CD8-positive, alpha-beta T cell (primary cell): ENCODE measurements at regions of chr12 and their contacts with region 1.

Region 1: GRCh38 chr12:12442548-12443071 is 85.7 kb downstream of the BORCS5 start:
- DNase-seq: peak in 2 of 9 experiments; percentile 33 to 62
- ATAC-seq: peak; percentile 0
- H3K4me3 ChIP-seq: no peak overlapping the region
- H3K4me3 Mint-ChIP-seq: peak overlapping the region; percentile 51
- H3K27ac ChIP-seq: peak overlapping the region; percentile 66 to 89
- H3K27ac Mint-ChIP-seq: peak overlapping the region; percentile 92
- H3K4me1 ChIP-seq: peaks cover 44% of the 10 kb centered on the region
- H3K4me1 Mint-ChIP-seq: peaks cover 72% of the 10 kb centered on the region
- H3K27me3 ChIP-seq: no peaks in the 10 kb centered on the region
- H3K27me3 Mint-ChIP-seq: no peaks in the 10 kb centered on the region
- CTCF ChIP-seq: no peak

Region 2: DNA sequence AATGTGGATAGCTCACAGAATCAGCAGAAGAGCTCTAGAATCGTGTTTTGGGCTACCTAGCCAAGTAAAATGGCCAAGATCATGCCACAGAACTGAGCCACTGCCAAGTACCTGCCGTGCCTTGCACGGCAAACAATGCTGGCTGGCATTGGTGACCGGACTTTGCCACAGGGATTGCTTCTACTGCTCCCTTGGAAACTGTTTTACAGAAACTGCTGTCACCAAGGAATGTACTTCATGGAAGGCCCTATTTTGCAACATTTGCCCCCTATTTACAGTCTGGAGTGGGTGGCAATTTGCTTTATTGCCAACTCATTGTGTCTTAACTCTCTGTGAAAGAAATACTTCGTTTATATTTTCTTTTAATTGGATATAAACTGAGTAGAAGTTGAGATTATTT is 36.7 kb before region 1 on chr12:
- CTCF ChIA-PET with region 1: interaction called, 3 read pairs
- POLR2A ChIA-PET with region 1: interaction called, 3 read pairs
- intact Hi-C with region 1: loop called in 1 of 2 experiments (anchors 5 kb)
- DNase-seq: no peak
- ATAC-seq: no peak
- H3K4me3 ChIP-seq: no peak overlapping the region
- H3K4me3 Mint-ChIP-seq: no peak overlapping the region
- H3K27ac ChIP-seq: no peak overlapping the region
- H3K27ac Mint-ChIP-seq: no peak overlapping the region
- H3K4me1 ChIP-seq: peaks cover 15% of the 10 kb centered on the region
- H3K4me1 Mint-ChIP-seq: peaks cover 40% of the 10 kb centered on the region
- H3K27me3 ChIP-seq: no peaks in the 10 kb centered on the region
- H3K27me3 Mint-ChIP-seq: no peaks in the 10 kb centered on the region
- CTCF ChIP-seq: no peak

Region 3: DNA sequence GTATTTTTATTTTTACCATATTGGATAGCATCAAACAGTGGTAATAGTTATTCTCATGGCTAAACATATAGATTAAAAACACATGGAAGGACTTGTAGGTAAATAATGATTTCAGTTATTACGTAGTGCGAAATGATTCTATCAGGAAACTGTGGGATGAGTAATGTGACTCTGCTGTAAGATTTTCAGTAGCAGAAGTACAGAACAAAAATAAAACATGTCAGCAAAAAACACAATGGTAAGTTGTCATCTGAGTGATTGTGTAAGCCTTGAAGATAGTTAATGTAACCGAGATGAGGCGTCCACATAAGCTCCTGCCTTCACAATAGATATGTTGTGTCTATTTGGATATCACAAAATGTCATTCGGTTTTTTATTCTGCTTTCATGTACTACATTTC is 14.0 kb after region 1 on chr12:
- CTCF ChIA-PET with region 1: interaction called, 4 read pairs
- POLR2A ChIA-PET with region 1: interaction called, 5 read pairs
- intact Hi-C with region 1: loop called in 1 of 2 experiments (anchors 2 kb)
- DNase-seq: peak in 1 of 9 experiments; percentile 29
- ATAC-seq: peak; percentile 64
- H3K4me3 ChIP-seq: no peak overlapping the region
- H3K4me3 Mint-ChIP-seq: peak overlapping the region; percentile 23
- H3K27ac ChIP-seq: no peak overlapping the region
- H3K27ac Mint-ChIP-seq: peak overlapping the region; percentile 28
- H3K4me1 ChIP-seq: no peaks in the 10 kb centered on the region
- H3K4me1 Mint-ChIP-seq: peaks cover 22% of the 10 kb centered on the region
- H3K27me3 ChIP-seq: no peaks in the 10 kb centered on the region
- H3K27me3 Mint-ChIP-seq: no peaks in the 10 kb centered on the region
- CTCF ChIP-seq: no peak

Region 4: GRCh38 chr12:12482959-12483358 is 40.3 kb after region 1 on chr12:
- CTCF ChIA-PET with region 1: interaction called, 3 read pairs
- POLR2A ChIA-PET with region 1: interaction called, 9 read pairs
- intact Hi-C with region 1: loop called (anchors 1 to 2 kb)
- DNase-seq: no peak
- ATAC-seq: no peak
- H3K4me3 ChIP-seq: peak overlapping the region in 1 of 2 experiments; percentile 11
- H3K4me3 Mint-ChIP-seq: peak overlapping the region; percentile 47
- H3K27ac ChIP-seq: peak overlapping the region; percentile 73 to 83
- H3K27ac Mint-ChIP-seq: peak overlapping the region; percentile 99
- H3K4me1 ChIP-seq: peaks cover 28% of the 10 kb centered on the region
- H3K4me1 Mint-ChIP-seq: peaks cover 52% of the 10 kb centered on the region
- H3K27me3 ChIP-seq: no peaks in the 10 kb centered on the region
- H3K27me3 Mint-ChIP-seq: no peaks in the 10 kb centered on the region
- CTCF ChIP-seq: no peak